ENCODE measurements at regions of chr17 and their contacts with region 1.

Region 1: DNA sequence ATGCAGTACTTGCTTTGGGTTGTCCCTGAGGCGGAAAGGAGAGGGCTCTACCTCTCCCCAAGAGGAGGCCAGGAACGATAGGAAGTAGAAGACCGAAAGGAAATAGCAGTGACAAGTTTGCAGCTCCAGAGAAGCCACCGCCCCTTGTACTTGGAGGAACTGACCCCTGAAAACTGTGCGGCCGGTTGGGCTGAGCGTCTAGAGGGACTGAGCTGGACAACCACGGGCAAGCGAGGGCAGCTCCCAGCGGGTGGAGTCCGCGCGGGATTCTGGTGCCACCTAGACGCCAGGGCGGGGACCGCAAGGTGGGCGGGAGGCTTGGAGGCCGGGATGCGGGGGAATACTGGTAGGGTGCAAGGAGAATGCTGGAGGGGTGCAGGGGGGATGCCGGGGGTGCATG is 1.3 kb upstream of the SLC6A4 start:
- DNase-seq: peak; percentile 40
- ATAC-seq: peak; percentile 80
- H3K4me3 ChIP-seq: no peak overlapping the region
- H3K27ac ChIP-seq: no peak overlapping the region
- H3K4me1 ChIP-seq: peaks cover 50% of the 10 kb centered on the region
- H3K27me3 ChIP-seq: no peaks in the 10 kb centered on the region
- CTCF ChIP-seq: peak; percentile 87
- EP300 ChIP-seq: no peak
- POLR2A ChIP-seq: no peak
- RAD21 ChIP-seq: peak; percentile 86

Region 2: GRCh38 chr17:30124273-30124796 is 112.4 kb before region 1 on chr17:
- CTCF ChIA-PET with region 1: interaction called, 10 read pairs
- POLR2A ChIA-PET with region 1: interaction called, 3 read pairs
- in situ Hi-C with region 1: loop called (anchors 10 kb)
- intact Hi-C with region 1: loop called (anchors 5 kb)
- DNase-seq: no peak
- ATAC-seq: no peak
- H3K4me3 ChIP-seq: no peak overlapping the region
- H3K27ac ChIP-seq: no peak overlapping the region
- H3K4me1 ChIP-seq: peaks cover 24% of the 10 kb centered on the region
- H3K27me3 ChIP-seq: no peaks in the 10 kb centered on the region
- CTCF ChIP-seq: no peak
- EP300 ChIP-seq: no peak
- POLR2A ChIP-seq: no peak
- RAD21 ChIP-seq: no peak

Region 3: DNA sequence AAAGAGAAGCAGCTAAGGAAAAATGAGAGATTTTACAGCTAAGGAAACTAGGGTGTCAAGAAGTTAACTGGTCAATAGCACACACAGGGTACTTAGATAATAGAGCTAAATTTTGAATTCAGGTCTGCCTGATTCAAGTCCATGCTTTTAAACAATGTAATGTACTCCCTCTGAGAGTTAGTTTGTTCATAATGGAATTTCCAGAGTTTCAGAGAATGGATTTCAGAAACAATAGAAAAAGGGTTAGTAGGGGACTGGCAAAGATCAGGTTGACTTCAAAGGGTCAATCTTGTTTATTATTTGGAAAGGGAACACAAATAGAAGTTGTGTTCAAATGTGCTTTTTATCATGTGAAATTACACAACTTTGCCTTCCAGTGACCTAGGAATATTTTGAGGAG is 102.2 kb before region 1 on chr17:
- CTCF ChIA-PET with region 1: no interaction called
- POLR2A ChIA-PET with region 1: no interaction called
- in situ Hi-C with region 1: loop called (anchors 10 kb)
- intact Hi-C with region 1: loop called (anchors 5 kb)
- DNase-seq: no peak
- ATAC-seq: no peak
- H3K4me3 ChIP-seq: no peak overlapping the region
- H3K27ac ChIP-seq: no peak overlapping the region
- H3K4me1 ChIP-seq: no peaks in the 10 kb centered on the region
- H3K27me3 ChIP-seq: no peaks in the 10 kb centered on the region
- CTCF ChIP-seq: no peak
- EP300 ChIP-seq: no peak
- POLR2A ChIP-seq: no peak
- RAD21 ChIP-seq: no peak

Measured in HepG2 (cell line).